ENCODE measurements at regions of chr2 and their contacts with region 1.

Region 1: GRCh38 chr2:130797493-130798435 is 39.0 kb upstream of the ARHGEF4 start:
- DNase-seq: peak; percentile 78 to 95 (median 88)
- ATAC-seq: peak; percentile 94
- H3K4me3 ChIP-seq: peak overlapping the region; percentile 97
- H3K4me3 Mint-ChIP-seq: peak overlapping the region; percentile 58 to 82 (median 73)
- H3K27ac ChIP-seq: peak overlapping the region; percentile 78
- H3K27ac Mint-ChIP-seq: peak overlapping the region in 5 of 9 donors; percentile 8 to 78 (median 50)
- H3K4me1 ChIP-seq: peaks cover 0 to 3% of the 10 kb centered on the region in 2 donors
- H3K4me1 Mint-ChIP-seq: peaks cover 0 to 15% (median 4%) of the 10 kb centered on the region in 7 donors
- H3K27me3 ChIP-seq: no peaks in the 10 kb centered on the region
- H3K27me3 Mint-ChIP-seq: peaks cover 0 to 15% (median 0%) of the 10 kb centered on the region in 5 donors

Region 2: DNA sequence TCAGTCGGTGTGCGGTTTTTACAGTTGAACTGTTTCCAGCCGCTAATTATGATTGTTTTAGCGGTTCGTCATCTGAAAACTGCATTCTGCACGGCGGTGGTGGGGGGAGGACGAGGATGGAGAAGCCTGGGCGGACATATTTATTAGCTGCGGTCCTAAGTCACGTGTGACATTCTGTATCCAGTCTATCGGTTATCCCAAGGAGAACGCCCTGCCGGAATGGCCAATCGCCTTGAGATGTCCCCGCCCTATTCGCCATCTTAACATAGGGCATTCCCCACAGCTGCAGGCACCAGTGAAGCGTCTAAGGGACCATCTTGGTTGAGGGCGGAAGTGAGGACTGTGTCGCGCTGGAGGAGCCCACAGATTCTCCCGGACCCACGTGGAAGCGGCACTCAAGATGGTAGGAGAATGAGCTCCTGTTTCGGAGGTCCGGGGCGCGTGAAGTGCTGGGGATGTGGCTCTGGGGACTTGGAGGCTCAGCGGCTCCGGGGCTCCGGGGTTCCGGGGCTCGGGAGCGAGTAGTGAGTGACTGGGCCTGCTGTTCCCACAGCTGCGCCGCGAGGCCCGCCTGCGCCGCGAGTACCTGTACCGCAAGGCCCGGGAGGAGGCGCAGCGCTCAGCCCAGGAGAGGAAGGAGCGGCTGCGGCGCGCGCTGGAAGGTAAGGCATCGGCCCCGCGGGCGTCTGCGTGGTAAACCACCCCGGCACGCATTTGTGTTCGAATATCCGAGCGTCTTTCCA is 455.1 kb before region 1 on chr2 and contains the start of gene IMP4:
- CTCF ChIA-PET with region 1: interaction called, 3 read pairs
- POLR2A ChIA-PET with region 1: interaction called, 4 read pairs
- intact Hi-C with region 1: loop called (anchors 1 kb)
- DNase-seq: peak; percentile 83 to 98 (median 96)
- ATAC-seq: peak; percentile 93
- H3K4me3 ChIP-seq: peak within 1 kb of the TSS; percentile 80
- H3K4me3 Mint-ChIP-seq: peak within 1 kb of the TSS; percentile 94 to 100 (median 99)
- H3K27ac ChIP-seq: peak within 1 kb of the TSS; percentile 97
- H3K27ac Mint-ChIP-seq: peak within 1 kb of the TSS; percentile 98 to 100 (median 99)
- H3K4me1 ChIP-seq: peaks cover 10 to 19% of the 10 kb centered on the region in 2 donors
- H3K4me1 Mint-ChIP-seq: peaks cover 17 to 51% (median 37%) of the 10 kb centered on the region in 7 donors
- H3K27me3 ChIP-seq: no peaks in the 10 kb centered on the region
- H3K27me3 Mint-ChIP-seq: peaks cover 0 to 2% (median 0%) of the 10 kb centered on the region in 5 donors
- total RNA-seq, gene IMP4: 69.9 to 88.5 (median 79.3) TPM

Region 3: DNA sequence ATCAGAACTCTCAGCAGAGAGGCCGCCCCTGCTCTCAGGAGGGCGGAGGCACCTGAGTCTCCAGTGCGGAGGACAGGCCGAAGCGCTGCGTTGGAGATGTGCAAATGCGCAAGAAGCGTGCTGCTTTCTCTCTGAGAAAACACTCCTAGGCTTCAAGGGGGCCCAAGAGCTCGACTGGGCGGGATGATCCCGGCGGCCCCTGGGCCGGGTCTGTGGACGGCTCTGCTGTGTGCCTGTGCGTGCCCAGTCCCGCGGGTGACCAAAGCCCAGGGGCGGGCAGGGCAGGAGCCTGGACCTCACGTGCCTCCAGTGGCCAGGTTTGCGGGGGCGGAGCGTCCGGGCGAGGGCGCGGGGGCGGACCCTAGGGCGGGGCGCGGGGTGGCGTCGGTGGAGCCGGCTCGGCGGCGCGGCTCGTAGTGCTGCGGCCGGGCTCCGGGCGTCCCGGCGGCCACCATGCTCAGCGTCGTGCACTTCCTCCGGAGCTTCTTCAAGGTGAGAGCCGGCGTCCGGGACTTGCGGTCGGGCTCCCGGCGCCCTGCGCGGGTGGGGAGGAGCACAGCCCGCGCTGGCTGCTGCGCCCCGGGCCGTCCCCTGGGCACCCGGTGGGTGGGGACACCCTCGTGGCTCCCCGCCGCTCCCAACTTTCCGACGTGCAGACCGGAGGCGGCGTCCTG is 38.9 kb after region 1 on chr2 and contains the start of gene ARHGEF4:
- CTCF ChIA-PET with region 1: no interaction called
- POLR2A ChIA-PET with region 1: no interaction called
- intact Hi-C with region 1: loop called (anchors 5 kb)
- DNase-seq: peak in 1 of 9 donors; percentile 40
- ATAC-seq: peak; percentile 21
- H3K4me3 ChIP-seq: no peak within 1 kb of the TSS
- H3K4me3 Mint-ChIP-seq: peak within 1 kb of the TSS in 5 of 10 donors; percentile 12 to 79 (median 49)
- H3K27ac ChIP-seq: no peak within 1 kb of the TSS
- H3K27ac Mint-ChIP-seq: no peak within 1 kb of the TSS
- H3K4me1 ChIP-seq: no peaks in the 10 kb centered on the region
- H3K4me1 Mint-ChIP-seq: peaks cover 0 to 3% (median 0%) of the 10 kb centered on the region in 7 donors
- H3K27me3 ChIP-seq: no peaks in the 10 kb centered on the region
- H3K27me3 Mint-ChIP-seq: peaks cover 38 to 60% (median 43%) of the 10 kb centered on the region in 5 donors
- total RNA-seq, gene ARHGEF4: 2.0 to 4.4 (median 3.0) TPM in 4 of 5 experiments, not detected in the other

Region 4: DNA sequence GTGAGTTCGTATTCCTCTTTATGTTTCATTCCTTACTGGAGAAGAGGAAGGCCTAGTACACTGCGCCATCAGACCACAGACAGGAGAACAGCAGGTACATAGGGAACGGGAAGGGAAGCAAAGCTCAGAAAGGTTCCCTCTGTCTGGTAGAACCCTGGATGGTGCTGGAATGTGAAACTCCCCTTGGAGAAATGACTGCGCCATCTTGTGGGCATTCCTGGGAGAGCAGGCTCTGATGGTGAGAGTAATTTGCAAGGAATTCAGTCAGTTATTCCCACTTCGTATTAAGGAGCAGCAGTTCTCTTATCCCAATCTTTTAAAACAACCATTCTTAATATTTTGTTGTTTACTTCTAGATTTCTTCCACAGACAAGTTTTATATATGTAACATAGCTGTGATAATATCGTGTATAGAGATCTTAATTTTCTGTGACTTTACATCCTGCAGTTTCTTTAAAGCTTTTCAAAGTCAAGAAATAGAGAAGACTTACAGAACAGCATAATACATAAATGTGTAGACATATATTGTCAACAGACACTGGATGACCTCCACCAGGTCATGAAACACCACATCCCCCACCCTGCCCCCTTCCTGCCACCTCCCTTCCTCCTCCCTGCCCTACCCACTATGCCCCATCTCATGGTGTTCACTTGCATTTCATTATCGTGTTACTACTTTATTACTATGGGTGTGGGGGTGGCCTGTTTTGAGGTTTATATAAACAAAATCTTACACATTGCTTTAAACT is 122.8 kb after region 1 on chr2:
- CTCF ChIA-PET with region 1: interaction called, 7 read pairs
- POLR2A ChIA-PET with region 1: no interaction called
- intact Hi-C with region 1: loop called (anchors 1 kb)
- DNase-seq: peak in 7 of 9 donors; percentile 6 to 61 (median 25)
- ATAC-seq: no peak
- H3K4me3 ChIP-seq: no peak overlapping the region
- H3K4me3 Mint-ChIP-seq: no peak overlapping the region
- H3K27ac ChIP-seq: no peak overlapping the region
- H3K27ac Mint-ChIP-seq: no peak overlapping the region
- H3K4me1 ChIP-seq: no peaks in the 10 kb centered on the region
- H3K4me1 Mint-ChIP-seq: peaks cover 0 to 3% (median 0%) of the 10 kb centered on the region in 7 donors
- H3K27me3 ChIP-seq: no peaks in the 10 kb centered on the region
- H3K27me3 Mint-ChIP-seq: peaks cover 5 to 17% (median 10%) of the 10 kb centered on the region in 5 donors

Region 5: DNA sequence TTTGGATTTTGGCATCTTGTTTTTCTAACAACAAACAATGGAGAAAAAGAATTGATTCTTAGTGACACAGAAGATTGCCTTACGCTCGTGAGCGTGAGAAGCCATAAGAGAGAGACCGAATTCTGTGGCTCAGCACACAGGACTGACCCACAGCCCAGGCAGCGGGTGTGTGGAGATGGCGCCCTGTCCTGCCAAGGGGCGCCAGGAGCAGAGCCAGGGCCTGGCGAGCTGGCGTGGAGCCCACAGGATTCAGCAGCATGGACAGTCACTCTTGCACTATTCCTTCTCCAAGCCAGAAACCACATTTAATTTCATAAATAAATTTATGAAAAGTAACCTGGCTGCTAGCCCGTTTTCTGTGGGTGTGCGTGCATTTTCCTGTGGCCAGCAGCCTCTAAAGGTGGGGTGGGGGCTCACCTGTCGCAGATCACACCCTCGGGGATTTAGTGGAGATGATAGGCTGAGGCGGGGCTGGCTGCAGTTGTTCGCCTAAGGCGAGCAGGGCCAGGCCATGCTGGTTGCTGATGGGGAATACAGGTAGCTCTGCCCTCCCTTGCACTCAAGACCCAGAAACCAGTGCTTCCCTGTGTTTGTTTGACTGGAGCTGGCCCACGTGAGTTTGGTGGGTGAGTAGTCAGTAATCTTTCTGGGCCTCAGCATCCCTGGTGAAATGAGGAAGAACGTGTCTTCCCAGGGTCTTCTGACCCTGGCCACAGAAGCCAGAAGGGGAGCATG is 249.3 kb after region 1 on chr2:
- CTCF ChIA-PET with region 1: no interaction called
- POLR2A ChIA-PET with region 1: no interaction called
- intact Hi-C with region 1: no loop called
- DNase-seq: no peak
- ATAC-seq: no peak
- H3K4me3 ChIP-seq: no peak overlapping the region
- H3K4me3 Mint-ChIP-seq: no peak overlapping the region
- H3K27ac ChIP-seq: no peak overlapping the region
- H3K27ac Mint-ChIP-seq: peak overlapping the region in 5 of 9 donors; percentile 7 to 70 (median 65)
- H3K4me1 ChIP-seq: peaks cover 2 to 3% of the 10 kb centered on the region in 2 donors
- H3K4me1 Mint-ChIP-seq: peaks cover 0 to 7% (median 4%) of the 10 kb centered on the region in 7 donors
- H3K27me3 ChIP-seq: no peaks in the 10 kb centered on the region
- H3K27me3 Mint-ChIP-seq: no peaks in the 10 kb centered on the region

Region 6: GRCh38 chr2:131105156-131105949 is 307.6 kb after region 1 on chr2 and contains the start of gene PLEKHB2:
- CTCF ChIA-PET with region 1: no interaction called
- POLR2A ChIA-PET with region 1: no interaction called
- intact Hi-C with region 1: loop called in 1 of 2 experiments (anchors 1 kb)
- DNase-seq: peak; percentile 88 to 99 (median 94)
- ATAC-seq: peak; percentile 81
- H3K4me3 ChIP-seq: peak within 1 kb of the TSS; percentile 95
- H3K4me3 Mint-ChIP-seq: peak within 1 kb of the TSS; percentile 93 to 98 (median 96)
- H3K27ac ChIP-seq: peak within 1 kb of the TSS; percentile 98
- H3K27ac Mint-ChIP-seq: peak within 1 kb of the TSS; percentile 93 to 99 (median 96)
- H3K4me1 ChIP-seq: peaks cover 15 to 22% of the 10 kb centered on the region in 2 donors
- H3K4me1 Mint-ChIP-seq: peaks cover 31 to 70% (median 52%) of the 10 kb centered on the region in 7 donors
- H3K27me3 ChIP-seq: no peaks in the 10 kb centered on the region
- H3K27me3 Mint-ChIP-seq: no peaks in the 10 kb centered on the region
- total RNA-seq, gene PLEKHB2: 43.1 to 92.3 (median 55.8) TPM

Region 7: GRCh38 chr2:131492418-131493198 is 694.8 kb after region 1 on chr2:
- CTCF ChIA-PET with region 1: no interaction called
- POLR2A ChIA-PET with region 1: no interaction called
- intact Hi-C with region 1: loop called (anchors 2 to 5 kb)
- DNase-seq: peak; percentile 89 to 99 (median 93)
- ATAC-seq: peak; percentile 84
- H3K4me3 ChIP-seq: peak overlapping the region; percentile 67
- H3K4me3 Mint-ChIP-seq: peak overlapping the region; percentile 89 to 98 (median 94)
- H3K27ac ChIP-seq: peak overlapping the region; percentile 96
- H3K27ac Mint-ChIP-seq: peak overlapping the region; percentile 89 to 99 (median 99)
- H3K4me1 ChIP-seq: peaks cover 13 to 14% of the 10 kb centered on the region in 2 donors
- H3K4me1 Mint-ChIP-seq: peaks cover 25 to 56% (median 42%) of the 10 kb centered on the region in 7 donors
- H3K27me3 ChIP-seq: no peaks in the 10 kb centered on the region
- H3K27me3 Mint-ChIP-seq: no peaks in the 10 kb centered on the region

Measured in naive thymus-derived CD4-positive, alpha-beta T cell (primary cell).